Ascending aorta (tissue), 2 donors: ENCODE measurements at regions of chr13 and their contacts with region 1.

Region 1: GRCh38 chr13:108961542-108962125 is 332.2 kb downstream of the MYO16 start:
- DNase-seq: no peak
- H3K4me3 ChIP-seq: no peak overlapping the region
- H3K27ac ChIP-seq: no peak overlapping the region
- H3K4me1 ChIP-seq: peaks cover 3 to 10% of the 10 kb centered on the region in 2 donors
- H3K27me3 ChIP-seq: no peaks in the 10 kb centered on the region
- CTCF ChIP-seq: peak; percentile 77 to 91 (median 80)

Region 2: DNA sequence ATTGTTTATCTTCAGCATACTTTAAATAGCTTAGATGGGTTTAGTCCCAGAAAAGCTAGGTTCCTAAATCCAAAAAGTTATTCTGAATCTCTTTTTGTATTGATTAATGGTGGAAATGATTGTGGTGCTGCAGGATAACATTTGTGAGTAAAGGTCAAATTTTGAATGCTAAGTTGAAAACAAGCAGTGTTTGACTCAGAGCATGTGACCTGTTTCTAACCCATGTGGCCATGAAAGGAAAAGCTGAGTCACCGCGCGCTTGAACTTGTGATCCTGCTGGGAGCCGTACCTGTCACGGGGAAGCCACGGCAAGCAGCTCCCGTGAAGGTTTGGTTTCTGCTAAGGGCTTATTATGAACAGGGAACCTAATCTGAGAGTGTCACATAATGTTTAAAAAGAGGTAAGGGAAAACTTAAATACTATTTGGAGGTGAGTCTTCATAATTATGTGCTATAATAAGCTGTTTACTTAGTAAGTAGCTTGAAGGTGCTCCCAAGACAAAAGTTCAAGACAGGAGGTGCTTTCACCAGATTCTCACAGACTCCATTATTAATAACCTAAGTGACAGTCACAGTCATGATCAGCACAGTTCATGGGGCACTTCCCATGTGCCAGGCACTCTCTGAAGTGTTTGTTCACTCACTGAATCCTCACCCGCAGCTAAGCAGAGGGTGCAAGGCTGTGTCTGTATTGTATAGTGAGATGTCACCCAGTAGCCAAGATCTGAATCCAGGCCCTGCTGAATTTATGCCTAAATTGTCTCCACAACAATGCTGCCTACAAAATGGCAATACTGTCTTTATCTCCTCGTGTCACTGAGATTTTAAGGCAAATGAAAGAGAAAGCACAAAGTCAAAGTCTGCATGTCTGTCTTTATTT is 45.8 kb before region 1 on chr13:
- intact Hi-C with region 1: loop called (anchors 2 kb)
- DNase-seq: peak; percentile 85 to 95
- H3K4me3 ChIP-seq: peak overlapping the region; percentile 31 to 41
- H3K27ac ChIP-seq: peak overlapping the region; percentile 79 to 91
- H3K4me1 ChIP-seq: peaks cover 3 to 15% of the 10 kb centered on the region in 2 donors
- H3K27me3 ChIP-seq: no peaks in the 10 kb centered on the region
- CTCF ChIP-seq: no peak

Region 3: DNA sequence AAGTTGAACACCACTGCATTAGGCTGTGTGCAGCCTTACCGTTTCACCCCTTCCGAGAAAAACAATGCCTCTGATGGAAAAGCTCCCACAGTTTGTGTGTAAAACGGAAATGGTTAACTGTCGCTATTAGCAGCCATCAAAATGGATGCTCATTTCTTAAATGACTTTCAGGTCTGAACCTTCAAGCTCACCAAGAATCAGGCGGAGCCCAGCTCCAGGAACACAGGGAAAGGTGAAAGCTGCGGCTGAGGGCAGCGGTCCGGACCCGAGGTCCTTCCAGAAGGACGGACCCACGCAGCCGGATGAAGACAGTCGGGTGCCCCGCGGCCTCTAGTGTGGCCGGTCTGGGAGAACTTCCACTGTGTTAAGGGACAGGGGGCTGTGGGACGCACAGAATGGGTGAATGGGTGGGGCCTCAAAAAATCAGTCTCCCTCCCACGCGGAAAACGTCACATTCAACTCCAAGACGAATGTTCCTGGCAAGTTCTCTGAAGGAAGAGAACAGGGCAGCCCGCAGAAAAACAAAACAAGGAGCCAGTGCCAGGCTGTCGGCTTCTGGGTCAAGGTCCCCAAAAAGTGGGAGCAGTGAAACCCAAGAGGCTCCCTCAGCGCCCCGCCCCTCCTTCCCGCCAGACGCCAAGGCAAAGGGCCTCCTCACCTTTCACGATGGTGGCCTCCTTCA is 819.9 kb after region 1 on chr13:
- intact Hi-C with region 1: loop called (anchors 2 kb)
- DNase-seq: no peak
- H3K4me3 ChIP-seq: peak overlapping the region; percentile 85
- H3K27ac ChIP-seq: peak overlapping the region; percentile 9 to 81
- H3K4me1 ChIP-seq: peaks cover 15 to 24% of the 10 kb centered on the region in 2 donors
- H3K27me3 ChIP-seq: no peaks in the 10 kb centered on the region
- CTCF ChIP-seq: no peak

Region 4: DNA sequence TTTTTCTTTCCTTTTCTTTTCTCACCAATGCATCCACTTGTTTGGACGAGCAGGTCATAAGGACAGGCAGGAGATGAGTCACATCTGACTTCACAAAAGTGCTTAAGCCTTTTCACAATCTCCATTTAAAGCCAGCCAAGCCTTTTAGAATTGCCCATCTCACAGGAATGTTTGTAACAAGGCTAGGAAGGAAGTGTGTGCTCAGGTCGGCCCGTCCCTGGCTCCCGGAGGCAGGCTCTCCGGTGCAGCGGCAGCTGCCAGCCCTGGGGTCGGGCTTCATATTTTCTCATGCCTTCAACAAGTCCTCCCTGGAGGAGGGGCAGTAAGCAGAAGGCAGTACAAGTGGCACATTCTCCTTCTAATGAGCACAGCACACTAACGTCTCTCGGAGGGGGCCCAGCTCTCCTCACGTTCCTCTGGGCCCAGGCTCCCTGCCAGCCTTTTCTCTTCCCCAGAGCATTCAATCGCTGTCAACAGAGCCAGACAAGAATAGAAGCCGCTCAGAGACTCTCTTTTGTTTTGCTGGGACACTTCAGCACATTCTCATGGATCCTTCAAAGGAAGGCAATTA is 1164.8 kb after region 1 on chr13:
- intact Hi-C with region 1: loop called (anchors 5 kb)
- DNase-seq: peak in 1 of 2 donors; percentile 84
- H3K4me3 ChIP-seq: peak overlapping the region in 1 of 2 donors; percentile 47
- H3K27ac ChIP-seq: peak overlapping the region; percentile 83 to 85
- H3K4me1 ChIP-seq: peaks cover 0 to 27% of the 10 kb centered on the region in 2 donors
- H3K27me3 ChIP-seq: no peaks in the 10 kb centered on the region
- CTCF ChIP-seq: no peak